IMR-90 (cell line): ENCODE measurements at regions of chr3 and their contacts with region 1.

Region 1: DNA sequence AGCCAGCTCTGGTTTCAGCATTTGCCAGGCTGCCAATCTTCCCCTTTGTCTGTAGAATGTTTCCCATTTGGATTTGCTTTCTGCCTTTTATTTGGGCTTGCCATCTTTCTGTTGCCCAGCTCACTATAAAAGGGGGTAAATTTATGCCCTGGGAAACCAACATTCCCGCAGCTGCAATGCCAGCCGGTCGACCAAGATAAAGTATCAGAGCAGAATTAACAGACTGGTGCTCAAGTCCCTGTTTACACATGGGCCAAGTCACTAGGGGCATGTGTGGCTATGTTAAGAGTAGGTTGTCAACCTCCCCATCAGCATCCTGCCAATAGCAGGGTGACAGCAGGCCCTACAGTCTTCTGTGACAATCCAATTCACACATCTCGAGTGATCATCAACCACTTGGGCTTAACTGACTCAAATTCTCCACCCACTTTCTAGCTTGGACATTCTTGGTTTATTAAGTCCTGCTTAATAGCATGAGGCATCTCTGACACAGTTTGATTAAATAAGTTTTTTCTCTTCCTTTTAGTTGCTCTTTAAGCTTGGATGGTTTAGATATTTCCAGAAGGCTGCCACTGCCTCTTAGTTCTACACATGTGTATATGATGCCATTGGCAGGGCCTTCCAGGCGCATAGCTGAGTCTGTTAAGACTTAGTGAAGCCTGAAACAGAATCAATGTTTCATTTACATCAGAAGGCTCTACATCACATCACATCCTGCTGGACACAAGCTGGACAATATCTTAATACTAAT is 24.1 kb upstream of the VEPH1 start:
- DNase-seq: peak; percentile 50
- ATAC-seq: peak; percentile 42
- H3K4me3 ChIP-seq: no peak overlapping the region
- H3K27ac ChIP-seq: peak overlapping the region; percentile 26; the same call in 1 of the 2 replicates
- H3K4me1 ChIP-seq: peaks cover 28% of the 10 kb centered on the region
- H3K27me3 ChIP-seq: no peaks in the 10 kb centered on the region
- CTCF ChIP-seq: no peak
- POLR2A ChIP-seq: no peak
- RAD21 ChIP-seq: no peak

Region 2: DNA sequence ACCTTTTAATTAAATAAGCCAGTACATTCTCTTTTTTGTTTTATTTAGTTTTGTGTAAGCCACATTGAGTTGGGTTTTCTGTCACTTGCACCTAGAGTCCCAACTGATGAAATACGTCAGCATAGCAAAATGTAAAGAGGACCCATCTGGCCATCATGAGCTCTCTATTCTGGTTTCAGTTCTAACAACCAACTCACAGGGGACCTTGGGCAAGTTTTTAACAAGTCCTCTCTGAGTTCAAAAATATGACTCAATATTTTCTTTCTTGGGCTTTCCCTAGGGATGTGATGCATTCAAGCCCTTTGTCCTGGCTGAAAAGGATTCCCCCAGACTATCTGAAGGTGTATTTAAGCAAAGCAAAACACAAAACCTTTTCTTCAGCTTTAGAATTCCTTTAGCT is 1815.3 kb before region 1 on chr3:
- CTCF ChIA-PET with region 1: no interaction called
- POLR2A ChIA-PET with region 1: no interaction called
- dilution Hi-C with region 1: no loop called
- in situ Hi-C with region 1: no loop called
- intact Hi-C with region 1: no loop called
- DNase-seq: no peak
- ATAC-seq: no peak
- H3K4me3 ChIP-seq: no peak overlapping the region
- H3K27ac ChIP-seq: no peak overlapping the region
- H3K4me1 ChIP-seq: no peaks in the 10 kb centered on the region
- H3K27me3 ChIP-seq: no peaks in the 10 kb centered on the region
- CTCF ChIP-seq: no peak
- POLR2A ChIP-seq: no peak
- RAD21 ChIP-seq: no peak

Region 3: DNA sequence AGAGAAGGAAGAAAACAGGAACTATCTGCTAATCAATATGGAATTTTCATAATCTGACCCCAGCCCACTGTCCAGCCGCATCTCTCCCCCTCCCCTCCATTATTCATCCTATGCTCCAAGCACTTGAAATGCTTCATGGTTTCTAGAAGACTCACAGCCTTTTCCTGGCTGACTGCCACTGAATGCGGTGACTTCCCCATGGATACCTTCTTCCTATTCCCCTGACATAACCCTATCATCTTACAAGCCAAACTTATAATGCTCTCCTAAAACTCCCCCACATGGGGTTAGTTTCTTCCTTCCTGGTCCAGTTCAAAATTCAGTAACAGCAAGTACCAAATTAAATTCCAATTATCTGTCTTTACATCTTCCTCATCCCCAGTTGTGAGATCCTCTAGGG is 121.8 kb before region 1 on chr3:
- CTCF ChIA-PET with region 1: no interaction called
- POLR2A ChIA-PET with region 1: no interaction called
- dilution Hi-C with region 1: no loop called
- in situ Hi-C with region 1: no loop called
- intact Hi-C with region 1: no loop called
- DNase-seq: peak; percentile 88
- ATAC-seq: peak; percentile 67
- H3K4me3 ChIP-seq: no peak overlapping the region
- H3K27ac ChIP-seq: no peak overlapping the region
- H3K4me1 ChIP-seq: peaks cover 5% of the 10 kb centered on the region; the same call in 1 of the 2 replicates
- H3K27me3 ChIP-seq: no peaks in the 10 kb centered on the region
- CTCF ChIP-seq: no peak
- POLR2A ChIP-seq: no peak
- RAD21 ChIP-seq: no peak

Region 4: GRCh38 chr3:157785102-157785826 is 258.0 kb after region 1 on chr3:
- CTCF ChIA-PET with region 1: no interaction called
- POLR2A ChIA-PET with region 1: no interaction called
- dilution Hi-C with region 1: no loop called
- in situ Hi-C with region 1: no loop called
- intact Hi-C with region 1: loop called (anchors 5 kb)
- DNase-seq: peak; percentile 94
- ATAC-seq: peak; percentile 92
- H3K4me3 ChIP-seq: no peak overlapping the region
- H3K27ac ChIP-seq: no peak overlapping the region
- H3K4me1 ChIP-seq: peaks cover 12% of the 10 kb centered on the region
- H3K27me3 ChIP-seq: no peaks in the 10 kb centered on the region
- CTCF ChIP-seq: no peak
- POLR2A ChIP-seq: no peak
- RAD21 ChIP-seq: no peak